Activated naive CD4-positive, alpha-beta T cell treated with anti-CD3 and anti-CD28 coated beads for 36 hours (primary cell): ENCODE measurements at regions of chr13 and their contacts with region 1.

Region 1: GRCh38 chr13:85828149-85828548 is 28.9 kb upstream of the SLITRK6 start:
- DNase-seq: no peak
- H3K4me3 Mint-ChIP-seq: no peak overlapping the region
- H3K27ac Mint-ChIP-seq: no peak overlapping the region
- H3K4me1 Mint-ChIP-seq: no peaks in the 10 kb centered on the region
- H3K27me3 Mint-ChIP-seq: no peaks in the 10 kb centered on the region

Region 2: GRCh38 chr13:84896128-84896527 is 932.0 kb before region 1 on chr13:
- CTCF ChIA-PET with region 1: no interaction called
- intact Hi-C with region 1: loop called (anchors 5 kb)
- DNase-seq: peak; percentile 63
- H3K4me3 Mint-ChIP-seq: no peak overlapping the region
- H3K27ac Mint-ChIP-seq: no peak overlapping the region
- H3K4me1 Mint-ChIP-seq: no peaks in the 10 kb centered on the region
- H3K27me3 Mint-ChIP-seq: no peaks in the 10 kb centered on the region

Region 3: GRCh38 chr13:84917252-84917878 is 910.8 kb before region 1 on chr13:
- CTCF ChIA-PET with region 1: no interaction called
- intact Hi-C with region 1: loop called (anchors 5 kb)
- DNase-seq: no peak
- H3K4me3 Mint-ChIP-seq: no peak overlapping the region
- H3K27ac Mint-ChIP-seq: no peak overlapping the region
- H3K4me1 Mint-ChIP-seq: no peaks in the 10 kb centered on the region
- H3K27me3 Mint-ChIP-seq: no peaks in the 10 kb centered on the region

Region 4: GRCh38 chr13:85935868-85936467 is 107.8 kb after region 1 on chr13:
- CTCF ChIA-PET with region 1: no interaction called
- intact Hi-C with region 1: no loop called
- DNase-seq: no peak
- H3K4me3 Mint-ChIP-seq: no peak overlapping the region
- H3K27ac Mint-ChIP-seq: no peak overlapping the region
- H3K4me1 Mint-ChIP-seq: no peaks in the 10 kb centered on the region
- H3K27me3 Mint-ChIP-seq: no peaks in the 10 kb centered on the region